ENCODE measurements at regions of chr5 and their contacts with region 1.

Region 1: GRCh38 chr5:132007399-132008165 is 3.9 kb downstream of the ACSL6 start:
- DNase-seq: peak in 1 of 2 donors; percentile 82
- H3K4me3 ChIP-seq: no peak overlapping the region
- H3K27ac ChIP-seq: no peak overlapping the region
- H3K4me1 ChIP-seq: peaks cover 5 to 11% of the 10 kb centered on the region in 2 donors
- H3K27me3 ChIP-seq: peaks cover 7% of the 10 kb centered on the region
- CTCF ChIP-seq: peak; percentile 51 to 72 (median 65)

Region 2: GRCh38 chr5:131423056-131423455 is 584.5 kb before region 1 on chr5:
- intact Hi-C with region 1: loop called (anchors 10 kb)
- DNase-seq: no peak
- H3K4me3 ChIP-seq: no peak overlapping the region
- H3K27ac ChIP-seq: no peak overlapping the region
- H3K4me1 ChIP-seq: no peaks in the 10 kb centered on the region
- H3K27me3 ChIP-seq: no peaks in the 10 kb centered on the region
- CTCF ChIP-seq: peak in 1 of 3 experiments; percentile 53

Region 3: DNA sequence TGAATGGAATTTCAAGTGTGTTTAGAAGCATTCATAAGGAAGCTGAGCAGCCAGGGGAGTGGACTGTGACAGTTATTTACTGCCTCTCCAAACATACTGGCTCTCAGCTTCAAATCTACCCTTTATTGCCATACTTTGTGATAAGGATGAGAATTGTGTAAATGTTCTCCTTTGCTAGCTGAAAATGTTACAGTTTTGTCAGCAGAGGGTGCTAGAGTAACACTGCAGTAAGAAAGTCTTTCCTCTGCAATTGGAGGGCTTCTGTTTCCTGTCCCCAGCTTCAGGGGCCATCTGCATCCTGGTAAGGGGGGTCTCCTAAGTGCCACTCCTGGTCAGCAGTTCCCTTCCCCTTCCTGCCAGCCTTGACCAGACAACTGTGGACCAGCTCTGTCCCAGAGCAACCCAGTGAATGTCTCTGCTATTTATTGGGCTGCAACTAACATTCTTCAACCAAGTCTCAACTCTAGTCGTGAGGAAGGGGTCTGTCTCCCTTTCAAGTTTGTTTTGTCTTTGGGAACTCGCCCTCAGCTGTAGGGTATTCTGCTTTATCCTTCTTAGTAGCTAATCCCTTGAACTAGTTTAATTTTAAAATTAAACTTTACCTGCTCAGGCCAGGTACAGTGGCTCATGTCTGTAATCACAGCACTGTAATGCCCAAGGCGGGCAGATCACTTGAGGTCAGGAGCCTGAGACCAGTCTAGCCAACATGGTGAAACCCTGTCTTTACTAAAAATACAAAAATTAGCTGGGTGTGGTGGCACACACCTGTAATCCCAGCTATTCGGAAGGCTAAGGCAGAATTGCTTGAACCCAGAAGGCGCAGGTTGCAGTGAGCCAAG is 417.9 kb before region 1 on chr5:
- intact Hi-C with region 1: loop called (anchors 1 kb)
- DNase-seq: no peak
- H3K4me3 ChIP-seq: no peak overlapping the region
- H3K27ac ChIP-seq: no peak overlapping the region
- H3K4me1 ChIP-seq: no peaks in the 10 kb centered on the region
- H3K27me3 ChIP-seq: no peaks in the 10 kb centered on the region
- CTCF ChIP-seq: peak; percentile 72 to 95 (median 82)

Region 4: DNA sequence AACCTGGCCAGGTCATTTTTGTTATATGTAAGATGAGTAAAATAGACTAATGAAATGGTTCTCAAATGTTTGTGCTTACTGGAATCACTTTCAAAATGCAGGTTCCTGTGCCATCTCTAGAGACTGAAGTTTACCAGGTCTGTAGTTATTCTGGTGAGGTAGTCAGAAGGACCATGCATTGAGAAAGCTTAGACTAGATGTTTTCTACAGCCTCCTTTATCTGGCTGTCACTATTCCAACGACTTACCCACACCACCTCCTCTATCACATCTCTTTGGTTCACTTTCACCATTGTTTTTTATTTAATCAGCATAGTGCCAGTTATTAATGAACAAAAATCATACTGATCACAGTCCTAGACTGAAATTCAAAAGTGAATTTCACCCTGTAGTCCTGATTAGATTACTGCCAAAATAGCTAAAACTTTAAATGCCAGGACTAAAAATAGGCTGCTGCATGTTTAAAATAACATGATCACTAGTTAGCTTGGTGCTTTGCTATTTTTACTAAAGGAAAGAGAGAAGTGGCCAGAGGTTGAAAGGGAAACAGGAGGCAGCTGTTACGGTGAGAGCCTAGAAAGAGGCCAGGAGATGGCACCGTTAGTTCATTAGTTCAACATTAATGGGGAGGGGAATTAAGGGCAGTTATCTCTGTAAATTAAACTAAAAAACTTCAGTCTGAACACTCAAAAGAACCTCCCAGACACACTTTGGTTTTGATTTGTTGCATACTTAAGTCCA is 196.9 kb before region 1 on chr5:
- intact Hi-C with region 1: loop called (anchors 1 kb)
- DNase-seq: no peak
- H3K4me3 ChIP-seq: peak overlapping the region; percentile 4 to 15
- H3K27ac ChIP-seq: peak overlapping the region; percentile 50 to 61
- H3K4me1 ChIP-seq: peaks cover 3 to 4% of the 10 kb centered on the region in 2 donors
- H3K27me3 ChIP-seq: no peaks in the 10 kb centered on the region
- CTCF ChIP-seq: peak in 2 of 3 experiments; percentile 15 to 37

Measured in ascending aorta (tissue), 2 donors.